ENCODE measurements at regions of chr9 and their contacts with region 1.

Region 1: GRCh38 chr9:33306037-33306436 is 15.7 kb downstream of the NFX1 start:
- DNase-seq: peak; percentile 42
- H3K4me3 Mint-ChIP-seq: no peak overlapping the region
- H3K27ac Mint-ChIP-seq: no peak overlapping the region
- H3K4me1 Mint-ChIP-seq: peaks cover 9% of the 10 kb centered on the region
- H3K27me3 Mint-ChIP-seq: no peaks in the 10 kb centered on the region

Region 2: GRCh38 chr9:33295571-33295970 is 10.5 kb before region 1 on chr9:
- intact Hi-C with region 1: loop called (anchors 1 kb)
- DNase-seq: no peak
- H3K4me3 Mint-ChIP-seq: peak overlapping the region; percentile 49
- H3K27ac Mint-ChIP-seq: peak overlapping the region; percentile 89
- H3K4me1 Mint-ChIP-seq: peaks cover 83% of the 10 kb centered on the region
- H3K27me3 Mint-ChIP-seq: no peaks in the 10 kb centered on the region

Region 3: GRCh38 chr9:33320568-33321261 is 14.7 kb after region 1 on chr9:
- intact Hi-C with region 1: loop called (anchors 2 kb)
- DNase-seq: no peak
- H3K4me3 Mint-ChIP-seq: no peak overlapping the region
- H3K27ac Mint-ChIP-seq: peak overlapping the region; percentile 53
- H3K4me1 Mint-ChIP-seq: peaks cover 13% of the 10 kb centered on the region
- H3K27me3 Mint-ChIP-seq: no peaks in the 10 kb centered on the region

Measured in activated T-helper 1 cell treated with anti-CD3 and anti-CD28 coated beads, Interleukin-12 subunit alpha, Interleukin-12 subunit beta, Interleukin-2, Interleukin-4 antibody, amounts not matched to agents 30 ng/mL and 10 ng/mL and 1 ng/mL, durations not matched to agents 14 hours and 24 hours and 36 hours (primary cell).